ENCODE measurements at regions of chrX and their contacts with region 1.

Region 1: DNA sequence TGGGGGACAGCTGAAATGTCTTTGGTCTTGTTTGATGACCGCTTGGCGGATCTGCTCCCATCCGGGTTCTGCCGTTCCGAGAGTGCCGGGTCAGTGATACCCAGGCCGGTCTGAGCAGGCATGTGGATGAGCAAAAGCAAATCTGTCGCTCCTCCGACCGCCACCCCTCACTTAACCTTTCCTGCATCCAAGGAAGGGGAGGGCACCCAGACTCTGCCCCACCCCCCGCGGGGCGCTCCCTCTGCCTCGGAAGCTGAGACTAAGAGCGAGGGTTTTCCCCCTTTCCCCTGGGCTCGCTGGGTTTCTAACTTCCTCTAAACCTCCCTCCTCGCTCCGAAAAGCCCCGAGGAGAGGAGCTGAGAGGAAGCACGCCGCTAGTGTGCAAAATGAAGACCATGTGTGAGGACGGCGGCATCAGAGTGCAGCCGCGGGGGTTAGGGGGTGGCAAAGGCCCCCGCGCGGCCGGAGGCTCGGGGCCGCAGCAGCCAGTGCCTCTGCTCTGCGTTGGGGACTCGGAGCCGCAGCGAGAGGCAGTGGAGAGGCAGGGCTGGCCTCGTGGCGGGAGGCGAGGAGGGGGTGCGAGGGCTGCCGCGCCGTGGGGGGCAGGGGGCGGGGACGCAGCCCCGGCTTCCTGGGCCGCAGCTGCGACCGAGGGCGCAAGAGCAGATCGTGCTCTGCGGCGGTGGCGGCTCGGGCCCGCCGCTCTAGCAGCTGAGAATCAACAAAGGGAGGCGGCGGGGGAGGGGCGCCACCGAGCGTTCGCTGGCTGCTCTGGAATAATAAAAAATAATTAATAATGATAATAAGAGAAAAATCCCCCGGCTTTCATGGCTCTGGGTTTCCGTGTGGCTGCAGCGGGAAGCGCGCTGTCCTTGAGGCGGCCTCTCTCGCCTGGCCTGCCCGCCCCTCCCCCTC is 55.8 kb upstream of the BCOR start:
- DNase-seq: no peak
- H3K4me3 ChIP-seq: peak overlapping the region; percentile 37 to 42
- H3K27ac ChIP-seq: peak overlapping the region; percentile 49
- H3K4me1 ChIP-seq: peaks cover 39% of the 10 kb centered on the region
- H3K27me3 ChIP-seq: peaks cover 9% of the 10 kb centered on the region
- CTCF ChIP-seq: peak in 1 of 3 experiments; percentile 39
- POLR2A ChIP-seq: no peak

Region 2: DNA sequence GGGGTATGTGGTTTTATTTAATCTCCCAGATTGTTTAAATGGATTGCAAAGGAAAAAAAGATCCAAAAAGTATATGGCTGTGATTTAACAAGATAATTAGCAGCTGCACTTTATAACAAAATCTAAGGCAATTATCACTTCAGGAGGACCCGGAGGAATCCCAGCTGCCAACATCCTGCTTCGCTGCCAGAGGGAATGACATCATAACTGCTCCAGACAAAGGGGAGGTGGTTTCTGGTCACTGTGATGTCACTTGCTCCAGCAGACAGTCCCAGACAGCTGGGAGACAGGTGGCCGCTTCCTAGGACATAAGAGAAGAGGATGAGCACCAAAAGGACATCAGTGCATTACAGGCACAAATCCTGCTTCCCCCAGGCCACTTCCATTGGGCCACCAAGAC is 426.8 kb before region 1 on chrX:
- intact Hi-C with region 1: loop called (anchors 5 kb)
- DNase-seq: no peak
- H3K4me3 ChIP-seq: no peak overlapping the region
- H3K27ac ChIP-seq: no peak overlapping the region
- H3K4me1 ChIP-seq: no peaks in the 10 kb centered on the region
- H3K27me3 ChIP-seq: no peaks in the 10 kb centered on the region
- CTCF ChIP-seq: no peak
- POLR2A ChIP-seq: no peak

Region 3: DNA sequence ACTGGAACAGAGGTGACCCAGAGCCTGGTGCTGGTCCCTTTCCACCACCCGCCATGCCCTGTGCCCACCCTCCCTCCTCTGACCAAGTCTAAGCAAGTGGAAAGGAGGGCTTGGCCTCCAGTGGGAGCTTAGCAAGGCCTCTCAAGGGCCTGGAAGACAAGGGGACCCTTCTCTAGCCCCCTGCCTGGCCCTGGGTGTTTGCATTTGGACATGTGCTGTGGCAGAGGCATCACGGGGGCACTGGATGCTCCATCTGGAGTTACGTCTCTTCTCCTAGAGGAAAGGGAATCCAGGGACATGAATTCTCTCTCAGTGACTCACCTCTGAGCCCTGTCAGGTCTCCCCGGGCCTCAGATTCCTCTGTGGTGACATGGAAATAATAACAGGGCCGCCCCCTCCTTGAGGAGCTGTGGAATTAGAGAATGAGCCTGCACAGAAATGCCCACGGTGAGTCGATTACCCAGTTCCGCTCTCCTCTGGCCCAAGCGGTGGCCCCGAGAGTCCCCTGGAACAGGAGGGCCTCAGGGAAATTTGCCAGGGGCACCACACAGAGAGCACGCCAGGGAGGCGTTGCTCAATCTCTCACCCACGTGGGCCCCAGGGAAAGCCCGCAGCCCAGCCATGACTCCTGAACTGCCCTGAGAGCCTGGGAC is 245.5 kb before region 1 on chrX:
- intact Hi-C with region 1: loop called (anchors 10 kb)
- DNase-seq: no peak
- H3K4me3 ChIP-seq: no peak overlapping the region
- H3K27ac ChIP-seq: no peak overlapping the region
- H3K4me1 ChIP-seq: peaks cover 19% of the 10 kb centered on the region
- H3K27me3 ChIP-seq: no peaks in the 10 kb centered on the region
- CTCF ChIP-seq: no peak
- POLR2A ChIP-seq: no peak

Region 4: DNA sequence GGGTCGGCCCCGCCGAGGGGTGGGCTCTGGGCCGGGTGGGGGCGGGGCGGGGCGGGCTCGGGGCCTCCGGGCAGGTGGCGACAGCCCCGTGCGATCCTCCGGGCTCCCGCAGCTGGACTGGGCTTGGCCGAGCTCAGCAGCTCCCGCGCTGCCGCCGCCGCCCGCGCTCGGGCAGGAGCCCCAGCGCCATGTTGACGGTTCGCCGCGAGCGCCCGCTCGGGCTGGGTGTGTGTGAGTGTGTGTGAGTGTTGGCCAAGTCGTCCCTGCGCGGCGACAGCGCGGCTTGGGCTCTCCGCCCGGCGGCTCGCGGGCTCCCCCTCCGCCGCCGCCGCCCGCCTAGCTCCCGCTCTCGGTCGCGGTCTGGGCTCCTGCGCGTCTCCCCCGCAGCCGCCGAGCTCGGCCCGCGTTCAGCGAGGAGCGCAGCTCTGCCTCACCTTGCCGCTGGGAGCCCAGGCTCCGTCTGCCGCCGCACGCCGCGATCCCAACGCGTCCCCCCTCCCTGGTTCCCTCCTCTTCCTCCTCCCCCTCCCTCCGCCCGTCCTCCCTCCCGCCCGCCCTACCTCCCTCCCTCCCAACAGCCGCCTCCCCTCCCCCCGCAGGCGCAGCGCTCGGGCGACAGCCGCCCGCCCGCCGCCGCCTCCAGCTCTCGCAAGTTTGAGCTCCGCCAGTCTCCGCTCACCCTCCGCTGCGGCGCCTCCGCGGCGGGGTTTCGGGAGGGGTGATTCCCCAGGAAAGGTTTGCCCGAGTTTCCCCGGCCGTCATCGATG is 55.9 kb before region 1 on chrX and contains the start of gene BCOR:
- intact Hi-C with region 1: loop called (anchors 5 kb)
- DNase-seq: no peak
- H3K4me3 ChIP-seq: peak within 1 kb of the TSS; percentile 61 to 65
- H3K27ac ChIP-seq: peak within 1 kb of the TSS; percentile 79
- H3K4me1 ChIP-seq: peaks cover 17% of the 10 kb centered on the region
- H3K27me3 ChIP-seq: peaks cover 10% of the 10 kb centered on the region
- CTCF ChIP-seq: no peak
- POLR2A ChIP-seq: peak in 1 of 2 donors; percentile 56
- total RNA-seq, gene BCOR: 19.9 TPM

Region 5: GRCh38 chrX:40108959-40109287 is 44.7 kb before region 1 on chrX:
- intact Hi-C with region 1: loop called (anchors 5 kb)
- DNase-seq: no peak
- H3K4me3 ChIP-seq: peak overlapping the region; percentile 45 to 64
- H3K27ac ChIP-seq: peak overlapping the region; percentile 71
- H3K4me1 ChIP-seq: peaks cover 35% of the 10 kb centered on the region
- H3K27me3 ChIP-seq: no peaks in the 10 kb centered on the region
- CTCF ChIP-seq: no peak
- POLR2A ChIP-seq: peak in 1 of 2 donors; percentile 3

Region 6: DNA sequence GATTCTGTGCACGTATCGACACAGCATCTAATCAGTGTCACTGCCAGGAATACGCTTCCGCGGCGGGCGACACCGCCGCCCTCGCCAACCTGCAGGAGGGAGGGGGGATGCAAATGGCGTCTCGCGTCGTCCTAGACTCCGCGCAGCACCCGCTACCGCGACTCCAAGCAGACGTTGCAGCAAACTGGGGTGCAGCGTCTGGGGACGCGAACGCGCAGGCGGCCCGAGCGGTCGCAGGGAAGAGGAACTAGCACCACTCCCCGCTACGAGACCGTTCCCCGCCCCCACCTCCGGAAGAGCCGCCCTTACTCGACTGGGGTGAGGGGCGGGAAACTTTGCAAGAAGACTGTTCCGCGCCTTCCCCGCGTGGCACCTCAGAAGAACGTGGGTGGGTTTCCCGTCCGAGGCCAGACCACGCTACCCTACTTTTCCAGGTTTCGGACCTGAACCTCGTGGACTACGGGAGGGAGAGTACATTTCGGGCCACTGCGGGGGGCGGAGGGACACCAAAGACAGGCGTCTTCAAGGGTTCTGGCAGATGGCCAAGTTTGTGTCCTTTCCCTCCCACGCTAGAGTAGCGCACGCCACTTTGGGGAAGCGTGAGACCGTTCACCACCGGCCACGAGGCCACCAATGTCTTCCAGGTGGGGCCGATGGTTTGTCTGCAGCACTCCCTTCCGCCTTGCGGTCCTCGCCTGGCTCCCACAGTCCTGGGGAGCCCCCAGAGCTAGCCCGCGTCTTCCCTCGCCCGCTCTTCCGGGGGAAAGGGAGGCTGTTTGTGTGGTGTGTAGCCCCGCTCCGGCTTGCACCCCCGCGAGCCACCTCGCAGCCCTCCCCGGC is 22.1 kb after region 1 on chrX:
- intact Hi-C with region 1: no loop called
- DNase-seq: peak in 1 of 2 donors; percentile 84
- H3K4me3 ChIP-seq: peak overlapping the region; percentile 54 to 59
- H3K27ac ChIP-seq: peak overlapping the region; percentile 80
- H3K4me1 ChIP-seq: peaks cover 29% of the 10 kb centered on the region
- H3K27me3 ChIP-seq: no peaks in the 10 kb centered on the region
- CTCF ChIP-seq: no peak
- POLR2A ChIP-seq: no peak